Esophagus squamous epithelium (tissue), 5 donors: ENCODE measurements at regions of chr1 and their contacts with region 1.

Region 1: GRCh38 chr1:163535807-163536206 is 214.1 kb downstream of the NUF2 start:
- DNase-seq: no peak
- H3K4me3 ChIP-seq: no peak overlapping the region
- H3K27ac ChIP-seq: no peak overlapping the region
- H3K4me1 ChIP-seq: peaks cover 0 to 11% (median 5%) of the 10 kb centered on the region in 3 donors
- H3K27me3 ChIP-seq: peaks cover 0 to 10% (median 0%) of the 10 kb centered on the region in 4 donors
- CTCF ChIP-seq: peak in 3 of 6 experiments; percentile 22 to 48 (median 23)
- POLR2A ChIP-seq: no peak

Region 2: GRCh38 chr1:165073185-165074007 is 1537.6 kb after region 1 on chr1:
- intact Hi-C with region 1: loop called (anchors 10 kb)
- DNase-seq: no peak
- H3K4me3 ChIP-seq: no peak overlapping the region
- H3K27ac ChIP-seq: no peak overlapping the region
- H3K4me1 ChIP-seq: peaks cover 0 to 4% (median 0%) of the 10 kb centered on the region in 3 donors
- H3K27me3 ChIP-seq: no peaks in the 10 kb centered on the region
- CTCF ChIP-seq: peak; percentile 23 to 83 (median 71)
- POLR2A ChIP-seq: no peak